GM13976 (cell line): ENCODE measurements at regions of chr11 and their contacts with region 1.

Region 1: DNA sequence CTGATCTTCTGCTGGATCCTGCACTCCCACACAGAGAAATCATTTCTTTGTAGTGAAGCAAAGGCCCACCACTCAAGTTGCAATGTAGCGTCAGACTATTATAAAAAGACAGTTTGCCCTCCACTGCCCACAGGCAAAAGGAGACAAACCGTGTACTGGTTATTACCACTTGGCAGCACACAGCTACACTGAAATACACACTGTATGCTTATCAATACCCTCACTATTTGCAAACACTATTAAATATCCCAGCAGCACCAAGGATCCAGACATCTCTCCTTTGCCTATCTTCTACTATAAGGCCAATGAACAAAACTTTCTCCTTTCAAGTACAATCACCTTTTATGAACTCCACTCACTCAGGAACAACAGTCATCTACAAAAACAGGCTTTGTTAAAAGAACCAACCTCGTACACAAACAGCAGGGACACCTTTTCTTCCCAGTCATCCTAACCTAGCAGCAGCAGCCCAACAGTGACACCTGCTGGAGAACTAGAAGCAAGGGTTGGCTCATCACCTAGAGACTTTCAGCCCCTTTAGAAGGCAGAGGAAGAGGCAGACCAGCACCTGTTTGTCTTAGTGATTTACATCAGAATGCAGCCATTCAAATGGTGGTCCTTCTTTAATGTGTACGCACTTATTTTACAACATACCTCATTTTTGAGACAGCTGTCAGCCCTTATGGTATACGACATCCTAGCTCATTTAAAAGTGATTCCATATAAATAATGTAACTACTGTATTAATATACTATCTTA is 56.1 kb downstream of the AMBRA1 start:
- DNase-seq: peak; percentile 76
- CTCF ChIP-seq: peak; percentile 81

Region 2: DNA sequence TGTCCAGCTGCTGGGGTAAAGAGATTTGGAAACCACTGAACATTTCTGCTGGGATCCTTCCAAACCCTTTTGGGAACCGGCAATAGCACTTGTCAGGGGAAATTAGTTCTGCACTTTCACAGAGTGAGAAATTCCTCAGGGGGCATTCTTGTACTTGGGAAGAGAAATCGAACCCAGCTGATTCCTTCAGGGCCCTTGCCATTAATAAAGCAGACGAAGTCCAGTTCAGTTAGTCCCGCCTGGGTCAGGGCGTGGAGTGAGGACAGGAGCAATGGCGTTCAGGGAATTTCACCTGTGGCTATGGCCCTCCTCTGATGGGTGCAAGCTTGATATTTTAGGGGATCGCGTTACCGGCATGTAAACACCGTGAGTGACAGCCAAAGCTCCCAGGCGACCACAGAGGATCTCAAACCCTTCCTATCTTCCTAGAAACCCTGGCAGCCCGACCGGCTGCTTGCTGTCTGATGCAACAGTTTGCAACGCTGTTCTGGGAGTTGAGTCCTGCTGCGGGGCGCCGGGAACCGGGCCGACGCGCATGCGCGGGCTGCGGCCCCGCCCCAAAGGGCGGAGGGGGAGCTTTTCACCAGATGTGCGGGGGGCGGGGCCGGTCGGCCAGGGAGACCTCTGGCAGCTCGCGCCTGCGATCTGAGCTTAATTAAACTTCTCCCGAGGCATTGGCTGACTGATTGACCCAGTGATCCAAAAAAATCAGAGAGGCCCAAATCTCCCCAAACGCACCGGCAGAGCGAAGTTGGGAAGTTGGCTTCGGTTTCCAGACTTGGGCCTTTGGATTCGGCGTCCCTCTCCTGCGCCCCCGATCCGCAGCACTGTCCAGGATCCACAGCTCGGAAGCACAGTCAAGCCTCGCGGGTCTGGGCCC is 294.6 kb before region 1 on chr11:
- in situ Hi-C with region 1: loop called (anchors 10 kb)
- DNase-seq: peak; percentile 97
- CTCF ChIP-seq: no peak

Region 3: DNA sequence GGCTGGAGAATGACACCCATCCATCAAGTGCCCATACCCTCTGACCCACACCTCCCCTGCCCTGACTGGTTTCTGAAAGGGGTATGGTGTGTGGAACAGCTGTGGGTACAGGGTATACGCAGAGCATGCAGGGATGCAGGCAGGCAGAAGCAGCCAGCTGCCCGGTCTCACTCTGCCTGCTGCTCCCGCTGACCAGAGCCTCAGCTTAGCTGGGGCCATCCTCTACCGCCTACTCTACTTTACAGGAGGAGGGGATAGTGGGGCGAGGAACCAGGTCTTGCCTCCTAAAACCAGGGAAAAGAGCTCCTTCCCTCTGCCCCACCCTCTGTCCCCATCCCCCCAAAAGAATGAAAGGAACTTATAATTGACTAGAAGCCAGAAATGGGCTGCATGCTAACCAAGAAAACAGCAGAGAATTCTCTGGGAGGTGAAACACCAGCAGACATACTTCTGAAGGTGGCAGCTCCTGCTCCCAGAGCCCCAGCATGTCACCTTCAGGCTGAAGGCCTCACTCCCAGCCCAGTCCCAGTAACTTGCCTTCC is 133.2 kb before region 1 on chr11:
- in situ Hi-C with region 1: loop called (anchors 10 kb)
- DNase-seq: no peak
- CTCF ChIP-seq: no peak

Region 4: GRCh38 chr11:46590740-46591606 is 53.3 kb after region 1 on chr11:
- in situ Hi-C with region 1: no loop called
- DNase-seq: no peak
- CTCF ChIP-seq: no peak